ENCODE measurements at regions of chr5 and their contacts with region 1.

Region 1: GRCh38 chr5:134101686-134102439 is 12.6 kb upstream of the TCF7 start:
- DNase-seq: peak; percentile 59 to 84 (median 73)
- ATAC-seq: peak; percentile 28
- H3K4me3 ChIP-seq: no peak overlapping the region
- H3K4me3 Mint-ChIP-seq: no peak overlapping the region
- H3K27ac ChIP-seq: peak overlapping the region; percentile 56 to 97
- H3K27ac Mint-ChIP-seq: peak overlapping the region; percentile 94
- H3K4me1 ChIP-seq: peaks cover 98% of the 10 kb centered on the region
- H3K4me1 Mint-ChIP-seq: peaks cover 94% of the 10 kb centered on the region
- H3K27me3 ChIP-seq: no peaks in the 10 kb centered on the region
- H3K27me3 Mint-ChIP-seq: no peaks in the 10 kb centered on the region
- CTCF ChIP-seq: peak; percentile 92

Region 2: GRCh38 chr5:134070725-134071613 is 30.9 kb before region 1 on chr5:
- CTCF ChIA-PET with region 1: interaction called, 5 read pairs
- POLR2A ChIA-PET with region 1: interaction called, 25 read pairs
- intact Hi-C with region 1: loop called in 1 of 2 experiments (anchors 2 kb)
- DNase-seq: peak in 10 of 14 experiments; percentile 18 to 63 (median 46)
- ATAC-seq: peak; percentile 60
- H3K4me3 ChIP-seq: peak overlapping the region; percentile 61
- H3K4me3 Mint-ChIP-seq: peak overlapping the region; percentile 89
- H3K27ac ChIP-seq: peak overlapping the region in 1 of 2 donors; percentile 60
- H3K27ac Mint-ChIP-seq: peak overlapping the region; percentile 81
- H3K4me1 ChIP-seq: peaks cover 64% of the 10 kb centered on the region
- H3K4me1 Mint-ChIP-seq: peaks cover 74% of the 10 kb centered on the region
- H3K27me3 ChIP-seq: no peaks in the 10 kb centered on the region
- H3K27me3 Mint-ChIP-seq: no peaks in the 10 kb centered on the region
- CTCF ChIP-seq: peak; percentile 30

Region 3: DNA sequence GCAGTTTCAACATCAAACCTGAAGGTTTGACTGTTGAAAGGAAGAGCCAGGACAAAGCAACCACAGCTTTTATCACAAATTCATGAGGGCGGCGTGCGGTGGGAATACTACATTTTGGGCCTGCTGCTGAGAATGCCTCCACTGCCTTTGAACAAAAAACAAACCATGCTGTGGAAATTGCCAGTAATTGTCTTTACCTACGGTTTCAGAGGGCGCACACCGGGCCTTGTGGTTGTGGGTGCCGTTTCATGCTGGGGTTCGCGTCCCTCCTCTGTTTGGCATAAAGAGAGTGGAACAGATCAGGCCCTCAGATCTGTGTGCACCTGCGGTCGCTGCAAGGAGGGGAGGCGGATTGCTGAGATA is 14.9 kb before region 1 on chr5:
- CTCF ChIA-PET with region 1: interaction called, 27 read pairs
- POLR2A ChIA-PET with region 1: no interaction called
- intact Hi-C with region 1: loop called (anchors 1 to 2 kb)
- DNase-seq: peak; percentile 62 to 92 (median 81)
- ATAC-seq: peak; percentile 74
- H3K4me3 ChIP-seq: no peak overlapping the region
- H3K4me3 Mint-ChIP-seq: peak overlapping the region; percentile 76
- H3K27ac ChIP-seq: peak overlapping the region; percentile 53 to 61
- H3K27ac Mint-ChIP-seq: peak overlapping the region; percentile 95
- H3K4me1 ChIP-seq: peaks cover 90% of the 10 kb centered on the region
- H3K4me1 Mint-ChIP-seq: peaks cover 88% of the 10 kb centered on the region
- H3K27me3 ChIP-seq: no peaks in the 10 kb centered on the region
- H3K27me3 Mint-ChIP-seq: no peaks in the 10 kb centered on the region
- CTCF ChIP-seq: no peak

Region 4: DNA sequence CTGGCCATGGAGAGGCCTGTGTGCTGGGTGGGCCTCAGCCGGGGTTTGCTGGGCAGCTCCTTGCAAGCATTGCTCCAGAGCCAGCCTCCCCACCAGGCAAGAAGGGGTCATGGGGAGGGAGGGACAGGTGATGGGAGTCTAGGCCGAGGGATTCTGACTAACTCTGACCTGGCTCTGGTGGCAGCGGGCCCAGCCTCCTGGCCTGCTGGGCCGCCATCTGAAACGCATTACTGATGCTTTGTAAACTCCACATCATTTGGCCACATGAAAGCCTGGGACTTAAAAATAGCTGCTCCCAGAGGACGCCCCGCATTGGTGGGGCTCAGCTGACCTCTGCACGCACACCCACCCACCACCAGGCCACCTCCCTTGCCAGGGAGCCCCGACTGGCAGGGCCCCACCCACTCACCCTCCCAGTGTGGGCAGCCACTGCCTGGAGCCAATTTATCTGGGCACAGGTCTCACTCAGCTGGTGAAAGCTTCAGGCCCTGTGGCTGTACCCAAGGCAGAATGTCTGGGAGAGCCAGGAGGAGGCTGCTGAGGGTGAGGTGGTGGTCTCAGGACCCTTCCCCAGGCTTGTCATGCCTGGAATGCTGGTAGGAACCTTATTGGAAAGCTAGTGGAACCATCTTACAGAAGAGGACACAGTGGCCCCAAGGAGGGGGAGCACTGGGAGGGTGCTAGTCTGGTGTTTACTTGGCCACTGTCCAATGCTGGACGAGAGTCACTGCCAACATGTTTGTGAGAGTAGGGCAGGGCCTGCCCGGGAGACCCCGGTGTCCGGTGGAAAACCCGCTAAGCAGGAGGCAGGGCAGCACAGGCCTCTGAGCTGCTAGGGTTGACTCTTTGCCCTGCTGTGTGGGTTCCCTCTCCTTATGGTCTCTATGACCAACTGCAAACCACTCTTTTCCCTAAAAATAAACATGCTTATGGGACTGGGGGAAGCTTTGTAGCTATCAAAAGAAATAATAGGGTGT is 23.5 kb after region 1 on chr5:
- CTCF ChIA-PET with region 1: interaction called, 11 read pairs
- POLR2A ChIA-PET with region 1: no interaction called
- intact Hi-C with region 1: no loop called
- DNase-seq: peak in 1 of 14 experiments; percentile 57
- ATAC-seq: no peak
- H3K4me3 ChIP-seq: peak overlapping the region; percentile 92
- H3K4me3 Mint-ChIP-seq: peak overlapping the region; percentile 95
- H3K27ac ChIP-seq: peak overlapping the region; percentile 75 to 96
- H3K27ac Mint-ChIP-seq: peak overlapping the region; percentile 98
- H3K4me1 ChIP-seq: peaks cover 100% of the 10 kb centered on the region
- H3K4me1 Mint-ChIP-seq: peaks cover 98% of the 10 kb centered on the region
- H3K27me3 ChIP-seq: no peaks in the 10 kb centered on the region
- H3K27me3 Mint-ChIP-seq: no peaks in the 10 kb centered on the region
- CTCF ChIP-seq: no peak

Region 5: GRCh38 chr5:134140530-134141201 is 38.8 kb after region 1 on chr5:
- CTCF ChIA-PET with region 1: interaction called, 77 read pairs
- POLR2A ChIA-PET with region 1: no interaction called
- intact Hi-C with region 1: loop called in 1 of 2 experiments (anchors 2 kb)
- DNase-seq: peak in 13 of 14 experiments; percentile 43 to 81 (median 54)
- ATAC-seq: peak; percentile 49
- H3K4me3 ChIP-seq: no peak overlapping the region
- H3K4me3 Mint-ChIP-seq: peak overlapping the region; percentile 36
- H3K27ac ChIP-seq: peak overlapping the region; percentile 57 to 96
- H3K27ac Mint-ChIP-seq: peak overlapping the region; percentile 98
- H3K4me1 ChIP-seq: peaks cover 79% of the 10 kb centered on the region
- H3K4me1 Mint-ChIP-seq: peaks cover 80% of the 10 kb centered on the region
- H3K27me3 ChIP-seq: no peaks in the 10 kb centered on the region
- H3K27me3 Mint-ChIP-seq: no peaks in the 10 kb centered on the region
- CTCF ChIP-seq: peak; percentile 72

Measured in CD4-positive, alpha-beta T cell (primary cell).